ENCODE measurements at regions of chr1 and their contacts with region 1.

Region 1: GRCh38 chr1:17551755-17552234 is 12.3 kb downstream of the ARHGEF10L start:
- DNase-seq: peak; percentile 89
- H3K4me3 ChIP-seq: peak overlapping the region in 1 of 2 experiments; percentile 15; a peak in 2 of 4 replicates
- H3K27ac ChIP-seq: peak overlapping the region; percentile 77 to 93
- H3K4me1 ChIP-seq: peaks cover 23 to 27% of the 10 kb centered on the region in 2 experiments; a peak in 3 of 4 replicates
- H3K27me3 ChIP-seq: no peaks in the 10 kb centered on the region
- CTCF ChIP-seq: no peak
- EP300 ChIP-seq: peak in 1 of 2 experiments; percentile 87; a peak in 2 of 4 replicates
- RAD21 ChIP-seq: peak; percentile 25

Region 2: GRCh38 chr1:17540255-17541001 is 11.4 kb before region 1 on chr1:
- CTCF ChIA-PET with region 1: interaction called, 3 read pairs
- POLR2A ChIA-PET with region 1: interaction called, 11 read pairs
- DNase-seq: peak; percentile 85
- H3K4me3 ChIP-seq: peak overlapping the region; percentile 85 to 89
- H3K27ac ChIP-seq: peak overlapping the region; percentile 82 to 92
- H3K4me1 ChIP-seq: peaks cover 13 to 30% of the 10 kb centered on the region in 2 experiments
- H3K27me3 ChIP-seq: no peaks in the 10 kb centered on the region
- CTCF ChIP-seq: no peak
- EP300 ChIP-seq: no peak
- RAD21 ChIP-seq: 0 out of 2 replicates have a peak, but pooled peaks have one; percentile 1